ENCODE measurements at regions of chr2 and their contacts with region 1.

Region 1: DNA sequence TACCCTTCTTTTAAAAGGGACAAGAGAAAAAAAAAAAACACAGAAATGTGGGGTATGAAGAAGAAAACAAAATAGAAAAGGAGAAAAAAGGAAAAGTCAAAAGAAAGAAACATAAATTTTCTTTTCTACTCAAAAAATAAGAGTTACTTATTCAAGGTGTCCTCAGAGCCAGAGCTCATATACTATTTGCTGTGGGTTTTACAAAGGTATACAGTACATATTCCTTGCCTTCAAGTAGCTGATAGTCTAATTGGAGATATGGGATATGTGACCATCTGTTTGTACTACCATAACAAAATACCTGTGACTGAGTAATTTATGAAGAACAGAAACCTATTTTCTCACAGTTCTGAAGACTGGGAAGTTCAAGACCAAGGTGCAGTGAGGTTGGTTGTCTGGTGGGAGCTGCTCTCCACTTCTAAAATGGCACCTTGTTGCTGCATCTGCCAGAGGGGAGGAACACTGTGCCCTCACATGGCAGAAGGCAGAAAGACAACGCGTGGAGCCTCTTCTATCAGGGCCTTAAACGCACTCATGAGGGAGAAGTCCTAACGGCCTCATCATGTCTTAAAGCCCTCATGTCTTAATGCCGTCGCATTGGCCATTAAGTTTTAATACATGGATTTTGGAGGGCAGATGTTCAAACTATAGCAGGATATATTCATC is 33.9 kb downstream of the NBAS start:
- DNase-seq: peak; percentile 34
- H3K4me3 ChIP-seq: no peak overlapping the region
- H3K27ac ChIP-seq: no peak overlapping the region
- H3K4me1 ChIP-seq: no peaks in the 10 kb centered on the region
- H3K27me3 ChIP-seq: no peaks in the 10 kb centered on the region
- CTCF ChIP-seq: peak; percentile 31

Region 2: GRCh38 chr2:15608392-15608761 is 81.2 kb after region 1 on chr2:
- CTCF ChIA-PET with region 1: no interaction called
- POLR2A ChIA-PET with region 1: interaction called, 18 read pairs
- intact Hi-C with region 1: no loop called
- DNase-seq: no peak
- H3K4me3 ChIP-seq: no peak overlapping the region
- H3K27ac ChIP-seq: no peak overlapping the region
- H3K4me1 ChIP-seq: no peaks in the 10 kb centered on the region
- H3K27me3 ChIP-seq: no peaks in the 10 kb centered on the region
- CTCF ChIP-seq: no peak

Region 3: DNA sequence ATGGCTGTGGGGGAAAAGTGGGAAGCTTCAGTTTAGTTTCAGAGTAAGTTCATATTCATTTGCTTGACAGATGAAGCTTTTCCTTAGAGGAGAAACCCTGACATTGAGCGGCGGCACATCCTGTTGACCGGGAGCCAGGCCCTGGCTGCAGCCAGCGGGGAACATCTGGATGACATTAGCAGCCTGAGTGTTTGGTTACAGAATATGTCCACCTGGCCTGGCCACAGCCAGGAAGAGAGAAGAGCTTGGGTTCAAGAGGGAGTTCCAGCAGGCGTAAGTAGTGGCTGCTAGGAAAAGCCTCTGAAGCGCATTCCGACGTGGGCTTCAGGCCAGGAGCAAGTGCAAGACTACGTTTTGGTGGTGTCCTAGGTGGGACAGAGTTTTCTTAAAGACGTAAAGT is 268.2 kb after region 1 on chr2:
- CTCF ChIA-PET with region 1: no interaction called
- POLR2A ChIA-PET with region 1: no interaction called
- intact Hi-C with region 1: no loop called
- DNase-seq: no peak
- H3K4me3 ChIP-seq: no peak overlapping the region
- H3K27ac ChIP-seq: no peak overlapping the region
- H3K4me1 ChIP-seq: no peaks in the 10 kb centered on the region
- H3K27me3 ChIP-seq: no peaks in the 10 kb centered on the region
- CTCF ChIP-seq: no peak